ENCODE measurements at regions of chr11 and their contacts with region 1.

Region 1: DNA sequence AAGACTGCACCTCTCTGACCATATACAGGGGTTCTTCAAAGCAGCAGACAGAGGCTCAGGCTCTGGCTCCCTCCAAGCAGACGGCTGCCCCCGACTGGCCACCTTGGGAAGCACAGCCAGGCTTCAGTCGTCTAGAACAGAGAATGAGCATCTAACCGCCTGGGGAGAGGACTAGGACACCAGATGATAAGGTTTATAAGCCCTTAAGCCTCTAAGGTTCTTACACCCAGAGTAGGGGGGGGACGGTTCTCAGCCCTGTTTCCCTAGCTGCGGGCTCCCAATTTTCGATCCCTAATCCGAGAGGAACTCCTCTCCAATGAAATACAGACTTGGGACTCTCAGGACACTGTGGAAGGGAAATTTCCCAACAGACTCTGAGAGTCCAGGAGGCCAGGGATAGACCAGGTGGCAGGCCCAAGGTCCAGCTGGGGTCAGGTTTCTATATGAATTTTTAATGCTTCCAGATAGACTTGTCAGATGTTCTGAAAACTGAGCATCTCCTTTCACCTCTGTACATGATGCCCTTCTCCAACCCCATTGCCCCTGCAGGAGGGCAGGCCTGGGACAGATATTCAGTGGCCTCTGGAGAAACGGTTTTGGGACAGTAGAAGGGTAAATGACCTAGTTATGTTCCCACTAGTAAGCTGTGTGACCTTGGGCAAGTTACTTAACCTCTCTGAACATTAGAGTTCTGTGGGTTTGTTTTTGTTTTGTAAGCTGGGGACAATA is 20.2 kb downstream of the RTN4RL2 start:
- DNase-seq: peak in 8 of 9 donors; percentile 30 to 75 (median 49)
- ATAC-seq: peak; percentile 58
- H3K4me3 ChIP-seq: no peak overlapping the region
- H3K4me3 Mint-ChIP-seq: peak overlapping the region in 1 of 10 donors; percentile 15
- H3K27ac ChIP-seq: no peak overlapping the region
- H3K27ac Mint-ChIP-seq: peak overlapping the region in 1 of 9 donors; percentile 49
- H3K4me1 ChIP-seq: peaks cover 10 to 19% of the 10 kb centered on the region in 2 donors
- H3K4me1 Mint-ChIP-seq: peaks cover 0 to 28% (median 18%) of the 10 kb centered on the region in 7 donors
- H3K27me3 ChIP-seq: no peaks in the 10 kb centered on the region
- H3K27me3 Mint-ChIP-seq: peaks cover 0 to 67% (median 16%) of the 10 kb centered on the region in 5 donors

Region 2: GRCh38 chr11:57001674-57002401 is 478.7 kb before region 1 on chr11:
- CTCF ChIA-PET with region 1: no interaction called
- POLR2A ChIA-PET with region 1: no interaction called
- intact Hi-C with region 1: no loop called
- DNase-seq: no peak
- ATAC-seq: no peak
- H3K4me3 ChIP-seq: no peak overlapping the region
- H3K4me3 Mint-ChIP-seq: no peak overlapping the region
- H3K27ac ChIP-seq: no peak overlapping the region
- H3K27ac Mint-ChIP-seq: no peak overlapping the region
- H3K4me1 ChIP-seq: no peaks in the 10 kb centered on the region
- H3K4me1 Mint-ChIP-seq: no peaks in the 10 kb centered on the region
- H3K27me3 ChIP-seq: no peaks in the 10 kb centered on the region
- H3K27me3 Mint-ChIP-seq: no peaks in the 10 kb centered on the region

Region 3: GRCh38 chr11:57426929-57427726 is 53.4 kb before region 1 on chr11 and contains the start of gene SLC43A3:
- CTCF ChIA-PET with region 1: no interaction called
- POLR2A ChIA-PET with region 1: no interaction called
- intact Hi-C with region 1: loop called in 1 of 2 experiments (anchors 5 kb)
- DNase-seq: peak; percentile 18 to 79 (median 38)
- ATAC-seq: peak; percentile 63
- H3K4me3 ChIP-seq: peak within 1 kb of the TSS; percentile 56
- H3K4me3 Mint-ChIP-seq: peak within 1 kb of the TSS; percentile 83 to 92 (median 89)
- H3K27ac ChIP-seq: peak within 1 kb of the TSS; percentile 62
- H3K27ac Mint-ChIP-seq: peak within 1 kb of the TSS; percentile 52 to 93 (median 82)
- H3K4me1 ChIP-seq: peaks cover 24 to 36% of the 10 kb centered on the region in 2 donors
- H3K4me1 Mint-ChIP-seq: peaks cover 40 to 55% (median 50%) of the 10 kb centered on the region in 7 donors
- H3K27me3 ChIP-seq: no peaks in the 10 kb centered on the region
- H3K27me3 Mint-ChIP-seq: peaks cover 0 to 24% (median 0%) of the 10 kb centered on the region in 5 donors
- total RNA-seq, gene SLC43A3: 10.5 to 67.9 (median 12.2) TPM

Region 4: DNA sequence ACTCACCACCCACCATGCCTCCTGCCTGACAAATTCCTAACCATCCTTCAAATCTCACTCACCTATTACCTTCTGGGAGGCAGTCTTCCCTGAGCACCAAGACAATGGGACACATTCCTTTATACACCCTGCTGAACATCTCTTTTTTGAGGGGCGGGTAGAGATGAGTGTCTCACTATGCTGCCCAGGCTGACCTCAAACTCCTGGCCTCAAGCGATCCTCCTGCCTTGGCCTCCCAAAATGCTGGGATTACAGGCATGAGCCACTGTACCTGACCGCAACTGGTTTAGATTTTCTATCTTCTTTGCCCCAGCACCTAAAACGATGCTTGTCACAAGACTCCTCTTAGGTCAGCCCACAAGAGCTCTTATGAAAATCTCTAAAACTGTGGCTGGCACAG is 42.8 kb after region 1 on chr11:
- CTCF ChIA-PET with region 1: interaction called, 11 read pairs
- POLR2A ChIA-PET with region 1: no interaction called
- intact Hi-C with region 1: loop called in 1 of 2 experiments (anchors 2 kb)
- DNase-seq: no peak
- ATAC-seq: no peak
- H3K4me3 ChIP-seq: no peak overlapping the region
- H3K4me3 Mint-ChIP-seq: no peak overlapping the region
- H3K27ac ChIP-seq: no peak overlapping the region
- H3K27ac Mint-ChIP-seq: peak overlapping the region in 1 of 9 donors; percentile 1
- H3K4me1 ChIP-seq: peaks cover 0 to 8% of the 10 kb centered on the region in 2 donors
- H3K4me1 Mint-ChIP-seq: peaks cover 0 to 13% (median 10%) of the 10 kb centered on the region in 7 donors
- H3K27me3 ChIP-seq: no peaks in the 10 kb centered on the region
- H3K27me3 Mint-ChIP-seq: no peaks in the 10 kb centered on the region

Region 5: GRCh38 chr11:57680552-57680874 is 199.9 kb after region 1 on chr11:
- CTCF ChIA-PET with region 1: no interaction called
- POLR2A ChIA-PET with region 1: no interaction called
- intact Hi-C with region 1: no loop called
- DNase-seq: no peak
- ATAC-seq: no peak
- H3K4me3 ChIP-seq: no peak overlapping the region
- H3K4me3 Mint-ChIP-seq: peak overlapping the region in 7 of 10 donors; percentile 8 to 54 (median 26)
- H3K27ac ChIP-seq: no peak overlapping the region
- H3K27ac Mint-ChIP-seq: peak overlapping the region in 8 of 9 donors; percentile 36 to 76 (median 46)
- H3K4me1 ChIP-seq: peaks cover 5 to 36% of the 10 kb centered on the region in 2 donors
- H3K4me1 Mint-ChIP-seq: peaks cover 34 to 69% (median 57%) of the 10 kb centered on the region in 7 donors
- H3K27me3 ChIP-seq: no peaks in the 10 kb centered on the region
- H3K27me3 Mint-ChIP-seq: no peaks in the 10 kb centered on the region

Region 6: DNA sequence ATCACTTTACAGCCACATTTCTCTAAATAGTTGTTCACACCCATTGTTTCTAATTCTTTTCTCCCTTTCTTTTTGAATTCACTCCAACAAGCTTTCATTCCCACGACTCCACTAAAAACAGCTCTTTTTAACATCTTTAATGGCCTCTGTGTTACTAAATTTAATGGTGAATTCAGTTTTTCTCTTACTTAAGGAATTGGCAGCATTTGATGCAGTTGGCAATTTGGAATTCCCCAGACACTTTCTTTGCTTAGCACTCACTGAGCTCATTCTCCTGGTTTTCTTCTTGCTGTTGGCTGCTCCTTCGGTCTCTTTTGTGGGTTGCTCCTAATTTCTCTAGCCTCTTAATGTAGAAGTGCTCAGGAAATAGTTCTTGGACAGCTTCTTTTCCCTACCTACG is 502.6 kb after region 1 on chr11:
- CTCF ChIA-PET with region 1: no interaction called
- POLR2A ChIA-PET with region 1: no interaction called
- intact Hi-C with region 1: no loop called
- DNase-seq: no peak
- ATAC-seq: no peak
- H3K4me3 ChIP-seq: no peak overlapping the region
- H3K4me3 Mint-ChIP-seq: no peak overlapping the region
- H3K27ac ChIP-seq: no peak overlapping the region
- H3K27ac Mint-ChIP-seq: no peak overlapping the region
- H3K4me1 ChIP-seq: no peaks in the 10 kb centered on the region
- H3K4me1 Mint-ChIP-seq: no peaks in the 10 kb centered on the region
- H3K27me3 ChIP-seq: no peaks in the 10 kb centered on the region
- H3K27me3 Mint-ChIP-seq: peaks cover 3 to 25% (median 10%) of the 10 kb centered on the region in 5 donors